ENCODE measurements at regions of chr9 and their contacts with region 1.

Region 1: DNA sequence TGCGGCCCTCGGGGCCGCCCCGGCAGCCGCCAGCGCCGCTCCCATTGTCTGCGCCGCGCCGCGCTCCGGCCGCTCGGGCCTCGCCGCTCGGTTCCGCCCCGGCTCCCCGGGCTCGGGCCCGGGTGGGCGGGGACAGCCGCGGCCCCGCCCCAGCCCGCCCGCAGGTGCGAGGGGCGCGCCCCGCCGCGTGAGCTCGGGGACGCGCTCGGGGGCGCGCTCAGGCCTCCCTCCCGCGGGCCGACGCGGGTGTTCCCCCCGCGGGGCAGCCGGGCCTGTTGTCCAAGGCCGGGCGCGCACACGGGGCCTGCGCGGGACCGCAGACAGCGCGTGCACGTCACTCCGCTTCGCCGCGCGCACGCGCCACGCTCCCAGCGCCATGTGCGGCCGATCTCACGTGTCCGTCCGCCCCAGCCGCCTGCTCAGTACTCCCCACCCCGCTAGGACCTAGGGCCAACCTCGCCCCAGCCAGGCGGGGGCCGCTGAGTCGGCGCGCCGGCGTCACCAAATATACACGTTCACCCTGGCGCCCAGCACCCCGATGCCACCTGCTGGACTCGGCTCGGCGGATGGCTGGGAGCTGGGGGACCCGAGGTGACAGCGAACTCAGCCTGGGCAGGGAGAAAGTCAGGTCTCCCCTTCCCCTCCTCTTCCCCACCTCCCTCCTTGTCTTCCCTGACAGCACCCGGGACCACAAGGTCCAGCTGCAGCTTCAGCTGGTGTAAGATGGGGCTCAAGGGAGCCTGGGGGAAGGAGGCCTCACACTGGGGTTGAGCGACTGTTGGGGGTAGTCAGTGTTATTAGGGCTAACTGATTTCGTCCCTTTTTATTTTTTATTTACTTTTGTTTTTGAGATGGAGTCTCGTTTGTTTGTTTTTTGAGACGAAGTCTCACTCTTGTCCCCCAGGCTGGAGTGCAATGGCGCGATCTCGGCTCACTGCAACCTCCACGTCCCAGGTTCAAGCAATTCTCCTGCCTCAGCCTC is 14.3 kb downstream of the GBGT1 start:
- DNase-seq: no peak
- H3K4me3 ChIP-seq: peak overlapping the region; percentile 79
- CTCF ChIP-seq: peak; percentile 27

Region 2: GRCh38 chr9:133030317-133031129 is 118.9 kb before region 1 on chr9 and contains the start of gene GTF3C5:
- CTCF ChIA-PET with region 1: interaction called, 462 read pairs
- POLR2A ChIA-PET with region 1: interaction called, 3 read pairs
- DNase-seq: peak; percentile 96
- H3K4me3 ChIP-seq: peak within 1 kb of the TSS; percentile 92
- CTCF ChIP-seq: no peak

Region 3: DNA sequence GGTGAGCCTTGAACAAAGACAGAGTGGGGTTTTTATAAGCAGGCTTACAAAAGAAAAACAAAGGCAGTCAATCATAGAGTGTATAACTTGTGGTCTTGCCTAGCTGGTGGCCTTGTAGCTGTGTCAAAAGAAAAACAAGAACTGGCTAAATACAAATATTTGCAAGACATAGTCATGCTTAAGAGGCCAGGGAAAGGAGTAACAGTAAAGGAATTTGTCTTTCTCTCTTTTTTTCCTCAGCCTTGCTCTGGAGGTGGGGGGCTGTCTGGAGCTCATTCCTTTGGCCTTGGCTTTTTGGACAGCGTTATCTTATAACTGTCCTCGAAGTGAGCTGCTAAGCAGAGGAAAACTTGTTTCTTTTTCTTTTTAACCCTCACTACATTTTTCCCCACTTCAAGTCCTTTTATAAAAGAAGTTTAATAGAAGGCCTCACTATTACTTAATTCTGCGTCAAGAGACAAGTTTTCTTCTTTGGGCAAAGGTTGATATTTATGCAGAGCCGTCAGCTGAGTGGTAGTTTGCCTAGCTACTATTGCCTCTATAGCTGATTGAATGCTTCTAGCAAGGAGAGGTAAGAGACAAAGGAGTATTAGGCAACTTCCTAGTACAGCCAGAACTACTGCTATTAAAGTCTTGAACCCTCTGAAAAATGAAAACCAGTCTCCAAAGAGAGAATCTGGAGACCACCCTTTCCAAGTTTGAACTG is 73.3 kb before region 1 on chr9:
- CTCF ChIA-PET with region 1: interaction called, 68 read pairs
- POLR2A ChIA-PET with region 1: no interaction called
- DNase-seq: peak; percentile 80
- H3K4me3 ChIP-seq: no peak overlapping the region; the same call in 1 of the 2 replicates
- CTCF ChIP-seq: no peak

Region 4: GRCh38 chr9:133133681-133134418 is 15.6 kb before region 1 on chr9:
- CTCF ChIA-PET with region 1: interaction called, 282 read pairs
- POLR2A ChIA-PET with region 1: interaction called, 3 read pairs
- DNase-seq: peak; percentile 61
- H3K4me3 ChIP-seq: no peak overlapping the region
- CTCF ChIP-seq: peak; percentile 0

Region 5: DNA sequence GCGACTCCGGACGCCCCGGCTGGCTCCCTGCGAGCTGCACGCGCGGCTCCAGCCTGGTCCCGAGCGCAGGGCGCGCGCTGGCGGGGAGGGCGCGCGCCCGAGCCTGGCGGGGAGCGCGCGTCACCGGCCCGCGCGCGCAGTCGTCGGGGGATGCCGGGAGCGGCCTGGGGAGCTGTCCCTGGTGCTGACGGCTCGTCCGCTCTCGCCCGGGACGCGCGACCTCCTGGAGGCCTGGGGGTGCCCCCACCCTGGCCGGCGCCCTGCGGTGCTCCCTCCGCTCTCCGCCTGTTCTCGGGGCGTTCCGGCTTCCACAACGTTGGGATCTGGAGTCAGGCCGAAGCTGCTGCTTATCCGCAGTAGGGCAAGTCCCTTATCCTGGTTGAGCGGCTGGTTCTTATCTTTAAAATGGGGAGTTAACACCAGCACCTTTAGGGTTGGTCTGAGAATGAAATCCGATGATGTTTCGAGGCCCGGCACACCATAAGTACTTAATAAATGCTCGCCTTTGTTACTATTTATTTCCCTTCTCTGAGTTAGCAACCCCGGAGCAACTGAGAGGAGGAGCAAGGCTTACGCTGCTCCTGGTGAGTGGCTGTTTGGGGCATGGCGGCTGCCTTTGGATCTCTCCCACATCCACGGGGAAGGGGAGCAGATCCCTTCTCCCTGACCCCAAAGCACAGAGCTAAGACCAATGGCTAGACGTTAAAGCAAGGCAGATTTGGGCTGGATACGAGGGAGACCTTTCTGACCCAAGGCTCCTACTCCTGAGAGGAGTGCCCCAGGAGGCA is 460.1 kb after region 1 on chr9 and contains the start of gene FAM163B:
- CTCF ChIA-PET with region 1: no interaction called
- POLR2A ChIA-PET with region 1: no interaction called
- DNase-seq: no peak
- H3K4me3 ChIP-seq: no peak within 1 kb of the TSS
- CTCF ChIP-seq: no peak

Measured in AG04449 (cell line).